Left ventricle myocardium superior (tissue), 1 donor: ENCODE measurements at regions of chr21 and their contacts with region 1.

Region 1: GRCh38 chr21:16419188-16419921 is 689.6 kb downstream of the USP25 start:
- DNase-seq: peak; percentile 76
- ATAC-seq: peak; percentile 91

Region 2: DNA sequence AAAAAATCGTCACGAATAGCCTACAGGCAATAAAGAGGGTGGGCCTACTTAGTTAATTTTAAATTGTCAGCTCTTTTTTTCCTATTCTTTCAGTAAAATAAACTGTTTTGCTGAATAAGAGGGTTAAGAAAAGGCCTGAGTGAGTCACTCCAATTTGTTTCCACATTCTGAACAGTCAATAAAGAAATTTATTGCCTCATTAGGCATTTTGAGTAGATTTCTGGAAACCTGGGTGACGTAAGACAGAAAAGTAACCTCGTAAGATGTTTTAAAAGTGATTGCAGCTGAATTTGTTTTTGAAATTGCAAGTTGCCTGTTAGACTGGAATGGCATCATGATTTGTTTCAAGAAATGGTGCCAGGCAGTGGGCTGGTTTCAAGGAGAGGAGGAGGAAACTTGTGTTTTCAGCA is 250.2 kb before region 1 on chr21:
- intact Hi-C with region 1: no loop called
- DNase-seq: no peak
- ATAC-seq: no peak

Region 3: DNA sequence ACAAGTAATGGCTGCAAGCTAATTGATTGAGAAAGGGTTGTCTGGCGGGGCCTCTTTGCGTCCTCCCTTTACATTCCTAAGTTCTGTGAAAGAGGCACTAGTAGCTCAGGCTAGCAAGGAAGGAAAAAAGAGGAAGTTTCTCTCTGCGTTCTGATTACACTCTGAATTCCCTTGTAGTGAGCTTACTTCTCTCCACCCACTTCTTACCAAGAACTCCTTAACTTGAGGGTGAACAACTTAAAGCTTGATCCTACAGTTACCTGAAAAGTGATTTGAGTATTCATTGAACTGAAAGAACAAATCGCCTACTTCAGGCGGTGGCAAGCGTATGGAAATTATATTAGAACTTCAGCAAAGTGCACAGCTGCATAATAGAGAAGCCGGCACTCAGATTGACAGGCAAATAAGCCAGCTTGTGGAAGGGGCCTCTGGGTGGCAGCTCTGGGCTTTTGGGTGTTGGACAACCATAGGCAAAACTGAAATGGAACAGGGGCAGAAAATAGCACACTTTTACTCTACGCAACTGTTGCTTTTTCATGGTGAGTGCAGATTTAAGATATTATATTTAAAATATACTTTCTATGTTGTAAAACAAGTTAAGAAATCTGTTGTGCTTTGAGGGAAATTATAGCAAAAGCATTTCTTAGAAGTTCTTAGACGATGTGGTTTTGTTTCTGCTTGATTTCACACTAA is 225.1 kb before region 1 on chr21:
- intact Hi-C with region 1: loop called (anchors 10 kb)
- DNase-seq: peak; percentile 69
- ATAC-seq: peak; percentile 95

Region 4: GRCh38 chr21:16377120-16377658 is 42.2 kb before region 1 on chr21:
- intact Hi-C with region 1: no loop called
- DNase-seq: no peak
- ATAC-seq: peak; percentile 60

Region 5: DNA sequence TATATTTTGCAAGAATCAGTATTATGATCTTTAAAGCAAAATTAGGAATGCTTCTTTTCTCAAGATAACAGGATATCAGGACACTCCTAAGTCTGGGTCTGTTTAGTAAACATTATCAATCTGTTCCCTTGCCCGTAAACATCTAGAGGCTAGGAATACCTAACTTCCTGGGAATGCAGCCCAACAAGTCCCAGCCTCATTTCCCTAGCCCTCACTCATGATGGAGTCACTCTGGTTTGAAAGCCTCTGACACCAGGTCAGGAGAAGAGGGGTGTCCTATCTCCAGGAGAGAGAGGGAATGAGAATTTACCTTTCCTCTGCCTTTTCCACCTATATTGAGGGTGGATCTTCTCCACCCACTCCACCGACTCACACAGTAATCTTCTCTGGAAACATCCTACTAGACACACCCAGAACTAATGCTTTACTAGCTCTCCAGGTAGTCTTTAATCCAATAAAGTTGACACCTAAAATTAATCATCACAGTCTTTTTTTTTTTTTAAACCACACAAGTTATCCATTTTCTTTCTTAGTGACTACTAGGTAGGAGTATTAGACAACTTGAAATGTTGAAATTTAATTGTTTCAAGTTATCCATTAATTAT is 30.3 kb before region 1 on chr21:
- intact Hi-C with region 1: no loop called
- DNase-seq: no peak
- ATAC-seq: no peak

Region 6: DNA sequence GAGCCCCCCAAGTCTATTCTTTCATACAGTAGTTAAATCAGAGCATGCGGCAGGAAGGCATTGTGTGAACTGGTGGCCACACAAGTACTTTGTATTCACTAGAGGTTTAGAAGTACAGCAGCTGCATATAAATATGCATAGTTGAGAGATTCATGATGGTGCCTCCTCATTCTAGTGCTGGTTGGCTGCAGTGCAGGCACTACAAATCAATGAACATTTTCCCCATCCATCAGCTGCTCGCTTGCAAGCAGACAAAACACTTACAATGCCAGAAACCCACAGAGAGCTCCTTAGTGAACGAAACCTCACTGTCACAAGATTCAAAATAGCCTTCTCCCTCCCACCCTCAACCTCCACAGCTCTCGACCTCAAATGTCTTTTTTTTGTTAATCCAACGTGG is 36.6 kb after region 1 on chr21:
- intact Hi-C with region 1: loop called (anchors 5 kb)
- DNase-seq: no peak
- ATAC-seq: peak; percentile 33

Region 7: DNA sequence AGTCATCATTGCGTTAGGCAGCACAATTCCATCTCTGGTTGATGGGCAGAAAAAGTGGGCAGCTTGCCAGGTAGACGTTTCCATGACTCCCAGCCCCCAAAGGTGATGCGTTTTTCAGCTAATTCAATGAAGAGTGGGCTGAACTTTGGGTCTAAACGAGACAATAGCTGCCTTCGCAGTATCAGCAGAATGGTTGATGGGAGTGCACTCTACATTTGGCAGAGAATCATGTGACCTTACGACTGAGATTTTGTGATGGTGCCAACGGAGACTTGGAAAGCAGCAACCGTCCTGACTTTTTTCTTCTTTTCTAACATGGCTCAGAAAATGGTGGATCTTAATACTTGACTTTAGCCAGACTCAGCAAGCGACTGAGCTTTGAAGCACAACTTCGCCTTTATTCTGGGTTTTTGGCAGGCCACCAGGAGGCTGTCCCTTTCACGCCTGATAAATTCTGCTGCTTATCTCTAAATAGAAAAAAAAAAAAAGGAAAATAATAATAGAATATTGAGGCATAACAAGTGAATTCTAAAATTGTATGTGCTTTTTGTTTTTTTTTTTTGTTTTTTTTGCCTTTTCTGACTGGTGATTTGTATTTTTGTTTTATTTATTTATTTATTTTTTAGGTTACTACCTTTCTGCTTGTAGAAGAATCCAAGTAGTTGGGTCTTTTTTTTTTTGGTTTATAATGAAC is 115.2 kb after region 1 on chr21:
- intact Hi-C with region 1: loop called (anchors 5 kb)
- DNase-seq: peak; percentile 79
- ATAC-seq: peak; percentile 76

Region 8: DNA sequence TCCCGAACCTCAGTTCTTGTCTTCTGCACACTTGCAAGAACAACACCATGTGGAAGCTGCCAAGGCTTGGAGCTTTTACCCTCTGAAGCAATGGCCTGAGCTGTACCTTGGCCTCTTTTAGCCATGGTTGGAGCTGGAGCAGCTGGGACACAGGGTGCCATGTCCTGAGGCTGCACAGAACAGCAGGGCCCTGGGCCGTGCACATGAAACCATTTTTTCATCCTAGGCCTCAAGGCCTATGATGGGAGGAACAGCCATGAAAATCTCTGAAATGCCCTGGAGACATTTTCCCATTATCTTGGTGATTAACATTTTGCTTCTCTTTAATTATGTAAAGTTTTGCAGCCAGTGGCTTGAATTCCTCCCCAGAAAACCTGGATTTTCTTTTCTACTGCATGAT is 275.7 kb after region 1 on chr21:
- intact Hi-C with region 1: no loop called
- DNase-seq: no peak
- ATAC-seq: no peak